PC-9 (cell line): ENCODE measurements at regions of chr7 and their contacts with region 1.

Region 1: GRCh38 chr7:112789817-112790585 is at the start of gene TMEM168:
- DNase-seq: peak; percentile 59 to 80
- H3K4me3 ChIP-seq: peak within 1 kb of the TSS; percentile 70
- H3K27ac ChIP-seq: peak within 1 kb of the TSS; percentile 26
- H3K4me1 ChIP-seq: peaks cover 11% of the 10 kb centered on the region
- H3K27me3 ChIP-seq: no peaks in the 10 kb centered on the region
- CTCF ChIP-seq: no peak
- total RNA-seq, gene TMEM168: 17.2 and 17.7 TPM in 2 replicates

Region 2: GRCh38 chr7:112707655-112708054 is 82.3 kb before region 1 on chr7:
- CTCF ChIA-PET with region 1: no interaction called
- POLR2A ChIA-PET with region 1: no interaction called
- intact Hi-C with region 1: no loop called
- DNase-seq: no peak
- H3K4me3 ChIP-seq: no peak overlapping the region
- H3K27ac ChIP-seq: no peak overlapping the region
- H3K4me1 ChIP-seq: no peaks in the 10 kb centered on the region
- H3K27me3 ChIP-seq: no peaks in the 10 kb centered on the region
- CTCF ChIP-seq: no peak

Region 3: DNA sequence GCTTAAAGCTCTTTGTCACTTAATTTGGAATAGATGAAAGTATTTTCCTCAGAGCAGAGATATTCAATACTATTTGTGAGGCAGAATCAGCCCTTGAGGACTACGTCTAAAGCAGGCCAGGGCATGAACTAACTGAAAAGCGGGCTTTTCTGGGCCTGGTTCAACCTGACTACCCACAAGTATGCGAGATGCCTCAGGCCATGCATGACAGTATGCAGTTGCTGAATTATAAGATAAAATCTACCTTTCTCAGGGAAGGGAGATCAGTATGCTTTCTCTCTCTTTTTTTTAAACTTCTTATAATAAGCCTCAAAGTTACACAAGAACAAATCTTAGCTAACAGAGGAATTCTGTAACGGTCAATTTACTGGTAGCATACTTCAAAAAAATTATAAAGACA is 19.9 kb before region 1 on chr7:
- CTCF ChIA-PET with region 1: no interaction called
- POLR2A ChIA-PET with region 1: interaction called, 4 read pairs
- intact Hi-C with region 1: loop called (anchors 1 kb)
- DNase-seq: peak; percentile 77 to 80
- H3K4me3 ChIP-seq: no peak overlapping the region
- H3K27ac ChIP-seq: no peak overlapping the region
- H3K4me1 ChIP-seq: no peaks in the 10 kb centered on the region
- H3K27me3 ChIP-seq: no peaks in the 10 kb centered on the region
- CTCF ChIP-seq: no peak